B cell (primary cell): ENCODE measurements at regions of chr15 and their contacts with region 1.

Region 1: GRCh38 chr15:90221246-90221900 is 12.4 kb downstream of the CIB1 start:
- DNase-seq: no peak
- ATAC-seq: no peak
- H3K4me3 ChIP-seq: no peak overlapping the region
- H3K4me3 Mint-ChIP-seq: peak overlapping the region; percentile 23
- H3K27ac ChIP-seq: peak overlapping the region in 1 of 2 donors; percentile 39
- H3K27ac Mint-ChIP-seq: peak overlapping the region; percentile 72
- H3K4me1 ChIP-seq: peaks cover 41 to 50% of the 10 kb centered on the region in 2 donors
- H3K4me1 Mint-ChIP-seq: peaks cover 52% of the 10 kb centered on the region
- H3K27me3 ChIP-seq: no peaks in the 10 kb centered on the region
- H3K27me3 Mint-ChIP-seq: no peaks in the 10 kb centered on the region
- CTCF ChIP-seq: peak; percentile 36

Region 2: DNA sequence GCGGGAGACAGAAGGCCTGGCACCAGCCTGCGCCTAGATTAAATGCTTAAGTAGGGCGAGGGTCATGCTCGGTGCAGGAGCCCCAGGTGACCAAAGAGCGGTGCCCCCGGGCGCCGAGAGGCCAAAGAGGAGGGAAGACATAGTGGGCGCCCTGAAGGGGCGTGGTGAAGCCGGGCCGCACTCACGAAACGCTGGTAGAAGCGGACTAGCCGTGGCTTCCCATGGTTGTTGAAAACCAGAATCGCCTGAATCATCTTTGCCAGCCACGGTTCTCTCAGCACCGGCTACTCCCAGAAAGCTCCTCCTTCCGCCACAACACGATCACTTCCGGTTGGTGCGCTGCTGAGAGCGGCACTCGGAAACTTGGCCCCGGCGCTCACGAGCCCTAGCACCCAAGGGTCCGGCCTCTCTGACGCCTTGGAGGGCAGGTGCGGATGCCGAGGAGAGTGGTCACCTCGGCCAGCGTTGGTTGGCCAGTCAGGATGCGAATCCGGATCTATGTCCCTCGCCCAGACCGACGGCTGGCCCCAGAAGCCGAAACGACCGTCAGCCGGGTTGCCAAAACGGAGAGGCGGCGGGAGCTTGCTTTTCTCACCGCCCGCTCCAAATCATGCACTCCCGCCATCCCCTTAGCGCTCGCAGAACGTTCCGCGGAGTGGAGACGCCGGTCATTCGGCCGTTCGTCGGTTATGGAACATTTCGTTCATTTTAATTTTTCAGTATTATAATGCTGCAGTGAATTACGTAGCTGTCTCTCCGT is 327.5 kb before region 1 on chr15 and contains the start of gene AP3S2:
- CTCF ChIA-PET with region 1: interaction called, 3 read pairs
- POLR2A ChIA-PET with region 1: no interaction called
- intact Hi-C with region 1: loop called (anchors 10 kb)
- DNase-seq: peak; percentile 93
- ATAC-seq: peak; percentile 91
- H3K4me3 ChIP-seq: peak within 1 kb of the TSS; percentile 75 to 95 (median 89)
- H3K4me3 Mint-ChIP-seq: peak within 1 kb of the TSS; percentile 98
- H3K27ac ChIP-seq: peak within 1 kb of the TSS; percentile 62 to 80
- H3K27ac Mint-ChIP-seq: peak within 1 kb of the TSS; percentile 95
- H3K4me1 ChIP-seq: peaks cover 7 to 14% of the 10 kb centered on the region in 2 donors
- H3K4me1 Mint-ChIP-seq: peaks cover 33% of the 10 kb centered on the region
- H3K27me3 ChIP-seq: no peaks in the 10 kb centered on the region
- H3K27me3 Mint-ChIP-seq: no peaks in the 10 kb centered on the region
- CTCF ChIP-seq: no peak
- total RNA-seq, gene AP3S2: 32.3 and 43.1 TPM in 2 replicates

Region 3: GRCh38 chr15:90154861-90155626 is 66.3 kb before region 1 on chr15:
- CTCF ChIA-PET with region 1: interaction called, 11 read pairs
- POLR2A ChIA-PET with region 1: interaction called, 36 read pairs
- intact Hi-C with region 1: no loop called
- DNase-seq: no peak
- ATAC-seq: no peak
- H3K4me3 ChIP-seq: no peak overlapping the region
- H3K4me3 Mint-ChIP-seq: no peak overlapping the region
- H3K27ac ChIP-seq: no peak overlapping the region
- H3K27ac Mint-ChIP-seq: peak overlapping the region; percentile 10
- H3K4me1 ChIP-seq: peaks cover 7 to 16% of the 10 kb centered on the region in 2 donors
- H3K4me1 Mint-ChIP-seq: peaks cover 18% of the 10 kb centered on the region
- H3K27me3 ChIP-seq: no peaks in the 10 kb centered on the region
- H3K27me3 Mint-ChIP-seq: no peaks in the 10 kb centered on the region
- CTCF ChIP-seq: no peak

Region 4: DNA sequence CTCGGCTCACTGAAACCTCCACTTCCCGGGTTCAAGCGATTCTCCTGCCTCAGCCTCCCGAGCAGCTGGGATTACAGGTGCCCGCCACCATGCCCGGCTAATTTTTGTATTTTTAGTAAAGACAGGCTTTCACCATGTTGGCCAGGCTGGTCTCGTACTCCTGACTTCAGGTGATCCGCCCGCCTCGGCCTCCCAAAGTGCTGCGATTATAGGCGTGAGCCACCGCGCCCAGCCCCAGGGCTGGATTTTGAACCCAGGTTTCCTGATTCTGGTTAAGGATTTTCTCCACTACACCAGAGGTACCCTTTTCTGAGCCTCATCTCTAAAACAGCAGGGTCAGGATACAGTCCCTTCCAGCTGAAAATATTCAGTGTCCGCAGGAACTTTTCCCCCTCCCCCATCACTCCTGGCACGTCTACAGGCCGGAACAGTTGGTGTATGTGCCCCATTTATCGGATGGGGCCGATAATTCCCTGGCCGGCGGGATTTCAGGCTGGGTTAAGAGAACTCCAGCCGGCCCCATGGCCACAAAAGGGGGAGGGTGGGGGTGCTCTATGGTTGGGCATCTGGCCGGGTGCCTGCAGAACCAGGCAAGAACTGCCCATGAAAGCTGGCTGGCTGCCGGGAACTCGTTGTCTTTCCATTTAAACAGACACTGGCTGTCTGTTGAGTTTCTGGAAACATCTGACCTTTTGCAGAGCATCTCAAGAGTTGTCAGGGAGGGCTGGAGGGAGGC is 47.1 kb before region 1 on chr15:
- CTCF ChIA-PET with region 1: interaction called, 15 read pairs
- POLR2A ChIA-PET with region 1: no interaction called
- intact Hi-C with region 1: no loop called
- DNase-seq: no peak
- ATAC-seq: no peak
- H3K4me3 ChIP-seq: no peak overlapping the region
- H3K4me3 Mint-ChIP-seq: no peak overlapping the region
- H3K27ac ChIP-seq: no peak overlapping the region
- H3K27ac Mint-ChIP-seq: no peak overlapping the region
- H3K4me1 ChIP-seq: peaks cover 16 to 20% of the 10 kb centered on the region in 2 donors
- H3K4me1 Mint-ChIP-seq: peaks cover 19% of the 10 kb centered on the region
- H3K27me3 ChIP-seq: no peaks in the 10 kb centered on the region
- H3K27me3 Mint-ChIP-seq: no peaks in the 10 kb centered on the region
- CTCF ChIP-seq: no peak

Region 5: DNA sequence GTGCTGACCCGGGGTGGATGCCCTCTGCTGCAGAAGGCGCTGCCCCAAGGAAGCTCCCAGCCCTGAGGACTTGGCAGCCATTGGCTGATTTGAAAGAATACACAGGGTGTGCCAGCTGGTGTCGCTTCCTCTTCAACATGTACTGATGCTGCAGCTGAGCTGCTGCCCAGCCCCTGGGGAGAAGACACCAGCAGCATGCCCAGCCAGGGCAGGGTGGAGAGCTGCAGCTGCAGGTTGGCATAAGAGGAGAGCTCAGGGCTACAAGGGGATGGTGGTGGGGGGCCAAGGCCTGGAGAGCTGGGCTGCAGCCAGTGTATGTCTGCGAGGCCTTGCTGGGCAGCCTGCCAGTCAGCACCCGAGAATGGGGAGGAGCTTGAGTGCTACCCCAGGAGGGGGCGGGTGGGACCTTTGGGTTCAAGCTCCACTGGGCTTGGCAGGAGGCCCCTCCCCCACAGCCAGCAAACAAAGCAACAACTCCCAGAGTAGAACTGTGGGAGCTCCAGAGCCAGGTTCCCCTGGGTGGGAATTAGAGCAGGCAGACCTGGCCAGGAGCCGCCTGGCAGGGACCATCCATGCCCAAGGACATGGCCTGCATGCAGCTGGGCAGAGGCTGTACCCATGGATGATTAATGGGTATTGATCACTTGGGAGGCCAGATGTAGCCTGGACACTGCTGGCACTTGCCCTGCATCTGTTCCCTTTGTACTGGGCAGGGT is 29.4 kb before region 1 on chr15:
- CTCF ChIA-PET with region 1: interaction called, 274 read pairs
- POLR2A ChIA-PET with region 1: interaction called, 163 read pairs
- intact Hi-C with region 1: no loop called
- DNase-seq: peak; percentile 90
- ATAC-seq: peak; percentile 70
- H3K4me3 ChIP-seq: peak overlapping the region; percentile 45 to 58 (median 53)
- H3K4me3 Mint-ChIP-seq: peak overlapping the region; percentile 87
- H3K27ac ChIP-seq: peak overlapping the region; percentile 88 to 91
- H3K27ac Mint-ChIP-seq: peak overlapping the region; percentile 97
- H3K4me1 ChIP-seq: peaks cover 81 to 96% of the 10 kb centered on the region in 2 donors
- H3K4me1 Mint-ChIP-seq: peaks cover 82% of the 10 kb centered on the region
- H3K27me3 ChIP-seq: no peaks in the 10 kb centered on the region
- H3K27me3 Mint-ChIP-seq: no peaks in the 10 kb centered on the region
- CTCF ChIP-seq: no peak

Region 6: GRCh38 chr15:90660195-90660998 is 439.0 kb after region 1 on chr15:
- CTCF ChIA-PET with region 1: no interaction called
- POLR2A ChIA-PET with region 1: no interaction called
- intact Hi-C with region 1: loop called (anchors 10 kb)
- DNase-seq: peak; percentile 58
- ATAC-seq: peak; percentile 82
- H3K4me3 ChIP-seq: peak overlapping the region; percentile 7 to 55 (median 30)
- H3K4me3 Mint-ChIP-seq: peak overlapping the region; percentile 66
- H3K27ac ChIP-seq: no peak overlapping the region
- H3K27ac Mint-ChIP-seq: peak overlapping the region; percentile 43
- H3K4me1 ChIP-seq: peaks cover 80 to 88% of the 10 kb centered on the region in 2 donors
- H3K4me1 Mint-ChIP-seq: peaks cover 76% of the 10 kb centered on the region
- H3K27me3 ChIP-seq: peaks cover 0 to 49% (median 29%) of the 10 kb centered on the region in 4 experiments
- H3K27me3 Mint-ChIP-seq: peaks cover 39% of the 10 kb centered on the region
- CTCF ChIP-seq: no peak